Activated CD4-positive, alpha-beta memory T cell treated with anti-CD3 and anti-CD28 coated beads, Interleukin-2, amount 10 ng/mL, durations not matched to agents 7 days and 5 days (primary cell): ENCODE measurements at regions of chr19 and their contacts with region 1.

Region 1: GRCh38 chr19:16185123-16185767 is at the start of gene FAM32A:
- DNase-seq: peak; percentile 100
- H3K4me3 Mint-ChIP-seq: peak within 1 kb of the TSS; percentile 97
- H3K27ac Mint-ChIP-seq: peak within 1 kb of the TSS; percentile 89
- H3K4me1 Mint-ChIP-seq: peaks cover 37% of the 10 kb centered on the region
- H3K27me3 Mint-ChIP-seq: peaks cover 2% of the 10 kb centered on the region
- total RNA-seq, gene FAM32A: 66.0 to 70.8 TPM

Region 2: GRCh38 chr19:15869109-15869555 is 316.1 kb before region 1 on chr19:
- CTCF ChIA-PET with region 1: no interaction called
- POLR2A ChIA-PET with region 1: no interaction called
- DNase-seq: peak; percentile 40
- H3K4me3 Mint-ChIP-seq: no peak overlapping the region
- H3K27ac Mint-ChIP-seq: no peak overlapping the region
- H3K4me1 Mint-ChIP-seq: peaks cover 4% of the 10 kb centered on the region
- H3K27me3 Mint-ChIP-seq: peaks cover 11% of the 10 kb centered on the region

Region 3: DNA sequence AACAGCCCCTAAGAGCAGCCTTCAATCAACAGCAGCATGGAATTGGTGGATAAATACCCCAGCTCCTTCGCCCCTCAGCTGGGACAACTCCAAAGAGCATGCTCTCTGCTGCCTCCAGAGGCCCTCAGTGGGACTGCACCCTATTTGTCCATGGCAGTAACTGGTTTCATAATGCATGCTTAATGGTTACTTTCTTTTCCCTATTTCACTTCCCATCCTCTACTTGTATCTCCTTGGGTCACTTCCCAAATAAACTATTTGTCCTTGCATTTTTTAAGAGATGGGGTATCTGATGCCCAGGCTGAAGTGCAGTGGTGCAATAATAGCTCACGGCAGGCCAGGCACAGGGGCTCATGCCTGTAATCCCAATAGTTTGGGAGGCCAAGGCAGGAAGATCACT is 122.5 kb before region 1 on chr19:
- CTCF ChIA-PET with region 1: interaction called, 17 read pairs
- POLR2A ChIA-PET with region 1: interaction called, 5 read pairs
- DNase-seq: peak; percentile 75
- H3K4me3 Mint-ChIP-seq: no peak overlapping the region
- H3K27ac Mint-ChIP-seq: no peak overlapping the region
- H3K4me1 Mint-ChIP-seq: peaks cover 25% of the 10 kb centered on the region
- H3K27me3 Mint-ChIP-seq: peaks cover 4% of the 10 kb centered on the region

Region 4: GRCh38 chr19:16076154-16076957 is 108.9 kb before region 1 on chr19 and contains the start of gene TPM4:
- CTCF ChIA-PET with region 1: interaction called, 6 read pairs
- POLR2A ChIA-PET with region 1: interaction called, 11 read pairs
- DNase-seq: peak; percentile 94
- H3K4me3 Mint-ChIP-seq: peak within 1 kb of the TSS; percentile 82
- H3K27ac Mint-ChIP-seq: peak within 1 kb of the TSS; percentile 98
- H3K4me1 Mint-ChIP-seq: peaks cover 65% of the 10 kb centered on the region
- H3K27me3 Mint-ChIP-seq: no peaks in the 10 kb centered on the region
- total RNA-seq, gene TPM4: 592 to 611 TPM

Region 5: GRCh38 chr19:16118489-16119033 is 66.7 kb before region 1 on chr19:
- CTCF ChIA-PET with region 1: interaction called, 10 read pairs
- POLR2A ChIA-PET with region 1: interaction called, 6 read pairs
- DNase-seq: peak; percentile 57
- H3K4me3 Mint-ChIP-seq: peak overlapping the region; percentile 75
- H3K27ac Mint-ChIP-seq: peak overlapping the region; percentile 99
- H3K4me1 Mint-ChIP-seq: peaks cover 77% of the 10 kb centered on the region
- H3K27me3 Mint-ChIP-seq: no peaks in the 10 kb centered on the region

Region 6: GRCh38 chr19:16235811-16236652 is 50.8 kb after region 1 on chr19:
- CTCF ChIA-PET with region 1: no interaction called
- POLR2A ChIA-PET with region 1: no interaction called
- DNase-seq: no peak
- H3K4me3 Mint-ChIP-seq: no peak overlapping the region
- H3K27ac Mint-ChIP-seq: no peak overlapping the region
- H3K4me1 Mint-ChIP-seq: peaks cover 15% of the 10 kb centered on the region
- H3K27me3 Mint-ChIP-seq: no peaks in the 10 kb centered on the region